CD4-positive, alpha-beta memory T cell (primary cell): ENCODE measurements at regions of chrX and their contacts with region 1.

Region 1: DNA sequence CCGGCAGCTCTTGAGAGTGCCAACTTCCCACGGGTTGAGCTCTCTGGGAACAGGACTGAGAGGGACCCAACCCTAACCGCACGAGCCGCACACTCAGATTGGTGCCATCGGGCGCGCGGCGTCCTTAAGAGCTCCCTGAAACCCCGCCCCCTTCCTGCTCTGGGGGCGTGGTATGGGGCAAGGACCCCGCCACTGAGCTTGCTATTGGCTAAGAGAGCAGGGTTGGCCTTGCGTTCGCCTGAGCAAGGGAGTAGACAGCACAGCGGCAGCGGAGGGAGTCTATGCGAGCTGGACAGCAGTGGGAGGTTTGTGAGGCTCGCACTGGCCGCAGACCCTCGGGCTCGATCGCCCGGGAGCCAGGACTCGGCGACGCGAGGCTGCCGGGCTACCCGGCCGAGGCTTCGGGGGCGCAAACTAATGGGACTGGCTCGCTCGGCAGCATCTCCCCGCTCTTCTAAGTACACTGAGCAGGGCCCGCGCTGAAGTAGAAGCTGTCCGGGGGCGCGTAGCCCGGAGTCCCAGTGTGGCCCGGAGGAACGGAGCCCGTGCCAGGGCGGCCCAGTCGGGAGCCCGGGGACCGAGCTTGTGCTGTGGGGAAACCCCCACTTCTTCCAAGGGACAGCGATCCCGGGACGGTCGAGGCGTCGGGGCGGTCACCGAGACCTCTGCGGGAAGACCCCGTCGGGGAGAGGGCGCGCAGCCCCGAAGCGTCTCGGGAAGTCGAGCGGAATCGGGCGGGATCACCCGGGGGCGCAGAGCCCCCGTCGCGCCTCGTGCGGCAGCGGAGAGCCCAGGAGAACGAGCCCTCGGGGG is at the start of gene EFNB1:
- DNase-seq: peak; percentile 86 to 90 (median 87)
- H3K4me3 ChIP-seq: peak within 1 kb of the TSS; percentile 42 to 79
- H3K4me3 Mint-ChIP-seq: peak within 1 kb of the TSS; percentile 93 to 99 (median 95)
- H3K27ac ChIP-seq: peak within 1 kb of the TSS; percentile 21
- H3K27ac Mint-ChIP-seq: peak within 1 kb of the TSS; percentile 85 to 93 (median 91)
- H3K4me1 ChIP-seq: peaks cover 20% of the 10 kb centered on the region
- H3K4me1 Mint-ChIP-seq: peaks cover 10 to 27% (median 18%) of the 10 kb centered on the region in 4 donors
- H3K27me3 ChIP-seq: no peaks in the 10 kb centered on the region
- H3K27me3 Mint-ChIP-seq: peaks cover 0 to 1% of the 10 kb centered on the region in 2 donors
- total RNA-seq, gene EFNB1: 4.5 to 4.9 TPM

Region 2: GRCh38 chrX:68978258-68979054 is 149.5 kb after region 1 on chrX:
- CTCF ChIA-PET with region 1: no interaction called
- POLR2A ChIA-PET with region 1: no interaction called
- intact Hi-C with region 1: no loop called
- DNase-seq: no peak
- H3K4me3 ChIP-seq: no peak overlapping the region
- H3K4me3 Mint-ChIP-seq: no peak overlapping the region
- H3K27ac ChIP-seq: no peak overlapping the region
- H3K27ac Mint-ChIP-seq: no peak overlapping the region
- H3K4me1 ChIP-seq: no peaks in the 10 kb centered on the region
- H3K4me1 Mint-ChIP-seq: peaks cover 0 to 8% (median 2%) of the 10 kb centered on the region in 4 donors
- H3K27me3 ChIP-seq: no peaks in the 10 kb centered on the region
- H3K27me3 Mint-ChIP-seq: peaks cover 0 to 2% of the 10 kb centered on the region in 2 donors

Region 3: DNA sequence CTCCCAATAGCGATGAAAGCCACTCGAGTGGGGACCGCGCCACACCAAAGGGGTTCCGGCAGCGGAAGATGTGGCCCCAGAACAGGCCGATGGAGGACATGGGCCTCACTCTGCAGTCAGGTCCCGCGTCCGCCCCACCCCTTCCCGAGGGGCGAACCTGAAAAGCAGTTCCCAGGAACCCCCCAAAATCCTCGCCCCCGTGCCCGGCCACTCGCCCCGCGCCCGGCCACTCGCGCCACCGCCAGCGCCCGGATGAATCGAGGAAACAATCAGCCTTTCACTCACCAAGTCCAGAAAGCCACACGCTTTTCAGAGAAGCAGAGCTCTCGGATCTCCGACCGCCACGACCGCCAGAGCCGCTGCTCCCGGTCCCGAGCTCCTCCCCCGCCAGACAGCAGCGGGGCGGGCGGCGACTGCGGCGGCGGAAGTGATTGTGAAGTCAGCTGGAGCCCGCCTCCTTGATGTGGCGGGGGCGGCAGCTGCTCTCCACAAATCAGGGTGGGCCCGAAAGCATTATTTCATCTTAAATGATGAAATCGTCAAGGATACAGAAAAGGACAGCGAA is 336.2 kb after region 1 on chrX and contains the start of gene PJA1:
- CTCF ChIA-PET with region 1: interaction called, 16 read pairs
- POLR2A ChIA-PET with region 1: interaction called, 13 read pairs
- intact Hi-C with region 1: loop called (anchors 1 kb)
- DNase-seq: peak; percentile 66 to 75 (median 70)
- H3K4me3 ChIP-seq: peak within 1 kb of the TSS; percentile 60 to 76
- H3K4me3 Mint-ChIP-seq: peak within 1 kb of the TSS; percentile 74 to 91 (median 88)
- H3K27ac ChIP-seq: peak within 1 kb of the TSS; percentile 64
- H3K27ac Mint-ChIP-seq: peak within 1 kb of the TSS; percentile 56 to 94 (median 92)
- H3K4me1 ChIP-seq: peaks cover 28% of the 10 kb centered on the region
- H3K4me1 Mint-ChIP-seq: peaks cover 21 to 40% (median 28%) of the 10 kb centered on the region in 4 donors
- H3K27me3 ChIP-seq: no peaks in the 10 kb centered on the region
- H3K27me3 Mint-ChIP-seq: no peaks in the 10 kb centered on the region
- total RNA-seq, gene PJA1: 23.9 to 27.1 TPM

Region 4: GRCh38 chrX:69285881-69286564 is 457.1 kb after region 1 on chrX:
- CTCF ChIA-PET with region 1: interaction called, 47 read pairs
- POLR2A ChIA-PET with region 1: no interaction called
- intact Hi-C with region 1: loop called (anchors 1 kb)
- DNase-seq: peak in 4 of 5 donors; percentile 40 to 52 (median 45)
- H3K4me3 ChIP-seq: peak overlapping the region in 1 of 2 donors; percentile 19
- H3K4me3 Mint-ChIP-seq: peak overlapping the region in 6 of 8 donors; percentile 17 to 61 (median 41)
- H3K27ac ChIP-seq: no peak overlapping the region
- H3K27ac Mint-ChIP-seq: no peak overlapping the region
- H3K4me1 ChIP-seq: peaks cover 4% of the 10 kb centered on the region
- H3K4me1 Mint-ChIP-seq: peaks cover 0 to 9% (median 1%) of the 10 kb centered on the region in 4 donors
- H3K27me3 ChIP-seq: no peaks in the 10 kb centered on the region
- H3K27me3 Mint-ChIP-seq: no peaks in the 10 kb centered on the region

Region 5: GRCh38 chrX:69615779-69616456 is 787.0 kb after region 1 on chrX and contains the start of gene EDA:
- CTCF ChIA-PET with region 1: no interaction called
- POLR2A ChIA-PET with region 1: no interaction called
- intact Hi-C with region 1: loop called (anchors 5 kb)
- DNase-seq: peak; percentile 63 to 74 (median 67)
- H3K4me3 ChIP-seq: peak within 1 kb of the TSS in 1 of 2 donors; percentile 35
- H3K4me3 Mint-ChIP-seq: peak within 1 kb of the TSS; percentile 84 to 91 (median 86)
- H3K27ac ChIP-seq: peak within 1 kb of the TSS; percentile 4
- H3K27ac Mint-ChIP-seq: peak within 1 kb of the TSS in 1 of 7 donors; percentile 66
- H3K4me1 ChIP-seq: peaks cover 4% of the 10 kb centered on the region
- H3K4me1 Mint-ChIP-seq: peaks cover 7 to 16% (median 12%) of the 10 kb centered on the region in 4 donors
- H3K27me3 ChIP-seq: no peaks in the 10 kb centered on the region
- H3K27me3 Mint-ChIP-seq: peaks cover 0 to 5% of the 10 kb centered on the region in 2 donors
- total RNA-seq, gene EDA: 2.8 to 4.0 TPM

Region 6: DNA sequence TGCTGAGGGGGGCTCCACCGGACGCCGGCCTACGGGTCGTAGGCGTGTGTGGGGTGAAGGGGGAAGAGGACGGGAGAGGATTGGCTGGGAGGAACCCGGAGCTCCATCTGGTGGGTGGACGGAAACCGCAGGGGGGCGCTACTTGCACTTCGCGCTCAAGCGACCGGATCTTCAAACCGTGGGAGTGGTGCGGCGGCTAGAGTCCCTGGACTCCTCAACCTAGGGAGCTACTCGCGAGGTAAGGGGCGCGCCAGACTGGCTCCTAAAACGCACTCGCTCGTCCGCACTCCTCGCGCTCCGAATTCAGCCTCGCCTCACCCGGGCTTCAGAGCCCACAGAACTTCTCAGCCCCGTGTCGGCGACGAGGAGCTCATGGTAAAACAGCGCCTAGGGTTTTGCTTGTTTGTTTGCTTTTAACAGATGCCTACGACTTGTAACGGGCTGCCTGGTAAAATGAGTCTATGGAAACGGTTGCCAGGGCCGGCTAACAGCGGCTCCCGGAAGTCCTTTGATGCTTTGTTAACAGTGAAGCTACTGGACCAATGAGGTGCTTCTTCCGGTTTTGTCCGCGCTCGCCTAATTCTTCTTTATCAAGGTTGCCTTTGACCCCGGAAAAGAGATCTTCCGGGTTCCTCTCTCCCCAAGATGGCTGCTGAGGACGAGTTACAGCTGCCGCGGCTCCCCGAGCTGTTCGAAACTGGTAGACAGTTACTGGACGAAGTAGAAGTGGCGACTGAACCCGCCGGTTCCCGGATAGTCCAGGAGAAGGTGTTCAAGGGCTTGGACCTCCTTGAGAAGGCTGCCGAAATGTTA is 1304.6 kb after region 1 on chrX and contains the start of gene IGBP1:
- CTCF ChIA-PET with region 1: interaction called, 6 read pairs
- POLR2A ChIA-PET with region 1: interaction called, 9 read pairs
- intact Hi-C with region 1: loop called (anchors 1 kb)
- DNase-seq: peak; percentile 78 to 94 (median 86)
- H3K4me3 ChIP-seq: peak within 1 kb of the TSS; percentile 89 to 90
- H3K4me3 Mint-ChIP-seq: peak within 1 kb of the TSS; percentile 87 to 99 (median 98)
- H3K27ac ChIP-seq: peak within 1 kb of the TSS; percentile 77
- H3K27ac Mint-ChIP-seq: peak within 1 kb of the TSS; percentile 84 to 99 (median 98)
- H3K4me1 ChIP-seq: peaks cover 35% of the 10 kb centered on the region
- H3K4me1 Mint-ChIP-seq: peaks cover 16 to 38% (median 22%) of the 10 kb centered on the region in 4 donors
- H3K27me3 ChIP-seq: no peaks in the 10 kb centered on the region
- H3K27me3 Mint-ChIP-seq: no peaks in the 10 kb centered on the region
- total RNA-seq, gene IGBP1: 60.8 to 66.2 TPM